ENCODE measurements at regions of chr2 and their contacts with region 1.

Region 1: GRCh38 chr2:219498280-219499057 is at the start of gene GMPPA:
- DNase-seq: peak; percentile 97
- H3K4me3 ChIP-seq: peak within 1 kb of the TSS; percentile 80
- H3K27ac ChIP-seq: peak within 1 kb of the TSS; percentile 86
- H3K27me3 ChIP-seq: peaks cover 3% of the 10 kb centered on the region
- CTCF ChIP-seq: 0 out of 2 replicates have a peak, but pooled peaks have one; percentile 7
- polyA plus RNA-seq, gene GMPPA: 90.1 and 97.7 TPM in 2 replicates

Region 2: GRCh38 chr2:219452838-219453317 is 45.6 kb before region 1 on chr2:
- CTCF ChIA-PET with region 1: interaction called, 18 read pairs
- POLR2A ChIA-PET with region 1: interaction called, 5 read pairs
- DNase-seq: peak; percentile 85
- H3K4me3 ChIP-seq: no peak overlapping the region
- H3K27ac ChIP-seq: peak overlapping the region; percentile 99
- H3K27me3 ChIP-seq: no peaks in the 10 kb centered on the region
- CTCF ChIP-seq: no peak

Region 3: GRCh38 chr2:219484343-219485200 is 13.9 kb before region 1 on chr2:
- CTCF ChIA-PET with region 1: interaction called, 32 read pairs
- POLR2A ChIA-PET with region 1: interaction called, 10 read pairs
- DNase-seq: no peak
- H3K4me3 ChIP-seq: no peak overlapping the region
- H3K27ac ChIP-seq: no peak overlapping the region
- H3K27me3 ChIP-seq: no peaks in the 10 kb centered on the region
- CTCF ChIP-seq: no peak

Region 4: DNA sequence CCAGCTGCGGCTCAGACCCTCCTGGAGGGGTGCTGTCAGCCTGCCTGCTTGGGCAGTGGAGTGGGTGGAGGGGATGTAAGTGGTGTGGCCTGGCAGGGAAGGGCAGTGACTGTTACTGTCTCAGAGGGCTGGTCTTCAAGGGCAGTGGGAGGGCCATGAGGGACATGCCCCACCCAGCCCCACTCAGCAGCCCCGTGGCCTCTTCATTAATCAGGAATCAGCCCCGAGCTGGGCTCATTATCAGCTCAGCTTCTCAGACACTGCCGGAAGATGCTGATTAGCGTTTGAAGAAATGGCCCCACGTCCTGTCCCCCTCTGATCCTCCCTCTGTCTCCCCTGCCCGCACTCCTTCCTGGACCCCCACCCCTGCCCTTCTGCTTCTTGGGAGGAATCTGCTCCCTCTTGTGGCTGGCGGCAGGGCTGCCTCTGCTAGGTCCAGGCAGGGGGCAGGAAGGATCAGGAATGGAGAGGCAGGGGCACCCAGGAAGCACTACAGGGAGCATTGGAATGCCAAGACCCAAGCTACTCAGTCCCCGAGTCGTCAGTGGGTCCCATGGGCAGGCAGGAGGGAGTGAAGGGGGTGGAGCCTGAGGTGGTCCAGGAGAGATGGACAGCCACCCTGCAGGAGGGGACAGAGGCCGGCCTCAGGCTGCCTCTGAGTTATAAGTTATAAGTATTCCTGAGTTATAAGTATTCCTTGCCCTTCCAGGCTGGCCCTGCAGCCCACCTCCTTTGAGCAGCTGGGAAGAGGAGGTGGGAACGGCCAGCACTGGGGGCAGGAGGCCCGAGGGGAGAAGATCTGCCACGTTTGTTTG is 22.8 kb after region 1 on chr2:
- CTCF ChIA-PET with region 1: interaction called, 168 read pairs
- POLR2A ChIA-PET with region 1: interaction called, 6 read pairs
- DNase-seq: no peak
- H3K4me3 ChIP-seq: no peak overlapping the region
- H3K27ac ChIP-seq: no peak overlapping the region
- H3K27me3 ChIP-seq: peaks cover 19% of the 10 kb centered on the region
- CTCF ChIP-seq: peak; percentile 87

Region 5: DNA sequence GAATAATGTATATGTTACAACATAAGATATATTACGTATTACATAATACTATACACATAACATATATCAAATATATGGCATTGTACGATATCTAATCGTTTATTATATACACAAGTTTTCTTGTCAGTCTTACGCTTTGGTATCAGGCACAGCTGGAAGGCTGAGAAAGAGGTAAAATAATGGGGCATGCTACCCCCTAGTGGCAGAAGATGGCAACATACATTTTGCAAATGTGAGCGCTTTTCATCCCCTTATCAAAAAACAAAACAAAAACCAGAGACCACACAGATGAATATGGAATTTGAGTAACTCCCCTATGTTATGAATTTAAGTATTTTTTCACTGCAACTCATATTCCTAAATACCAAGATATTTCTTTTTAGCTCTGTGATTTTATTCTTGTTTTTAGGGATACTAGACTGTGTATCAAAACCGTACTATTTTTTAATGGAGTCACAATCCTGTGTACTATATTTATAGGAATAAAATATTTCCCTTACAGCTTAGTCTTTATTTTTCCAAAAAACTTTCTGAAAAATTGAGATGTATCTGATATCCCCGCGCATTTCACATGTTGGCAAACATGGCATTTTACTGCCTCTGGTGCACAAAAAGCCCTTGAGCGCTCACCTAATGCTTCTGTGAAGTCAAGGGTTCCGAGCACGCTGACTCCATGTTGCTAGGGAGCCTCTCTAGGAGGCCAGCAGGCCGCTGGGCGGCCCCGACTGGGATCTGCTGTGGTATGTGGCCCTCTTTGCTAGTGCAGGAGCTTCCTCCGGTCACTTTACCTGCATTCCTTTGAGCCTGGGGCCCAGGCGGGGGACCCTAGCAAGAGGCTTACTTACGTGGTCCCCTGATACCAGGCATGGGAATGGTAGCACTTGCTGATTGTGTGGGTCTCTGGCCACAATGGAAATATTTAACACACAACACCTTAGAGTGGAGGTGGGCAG is 191.5 kb after region 1 on chr2:
- CTCF ChIA-PET with region 1: interaction called, 18 read pairs
- POLR2A ChIA-PET with region 1: no interaction called
- DNase-seq: no peak
- H3K4me3 ChIP-seq: no peak overlapping the region
- H3K27ac ChIP-seq: no peak overlapping the region
- H3K27me3 ChIP-seq: peaks cover 3% of the 10 kb centered on the region
- CTCF ChIP-seq: peak; percentile 73

Measured in AG04450 (cell line).